Right ventricle myocardium inferior (tissue), 1 donor: ENCODE measurements at regions of chr6 and their contacts with region 1.

Region 1: GRCh38 chr6:55886185-55886836 is 10.9 kb upstream of the BMP5 start:
- DNase-seq: no peak
- ATAC-seq: no peak

Region 2: DNA sequence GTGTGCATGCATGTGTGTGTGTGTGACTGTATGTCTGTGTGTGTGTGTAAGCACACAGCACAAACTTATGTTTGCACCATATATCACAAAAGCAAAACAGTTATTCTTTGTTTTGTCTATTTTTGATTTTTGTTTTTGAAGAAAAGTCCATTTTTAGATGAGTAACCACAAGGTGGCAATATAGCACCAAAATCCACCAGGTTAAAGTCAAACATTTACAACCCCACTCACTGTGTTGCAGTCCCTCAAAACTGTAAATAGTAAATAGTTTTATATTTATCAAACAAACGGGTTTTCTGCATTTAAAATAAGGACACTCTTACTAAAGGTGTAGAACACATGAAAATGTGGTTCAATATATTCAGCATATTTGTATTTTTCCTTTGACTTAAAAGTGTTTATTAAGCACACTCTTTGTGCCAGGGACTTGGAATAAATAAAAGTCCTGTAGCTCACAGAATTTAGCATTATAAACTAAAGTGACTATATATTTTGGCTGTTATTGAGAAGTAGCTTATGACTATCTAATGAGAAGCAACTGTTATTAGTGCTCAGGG is 440.6 kb before region 1 on chr6:
- intact Hi-C with region 1: loop called (anchors 2 kb)
- DNase-seq: no peak
- ATAC-seq: no peak

Region 3: GRCh38 chr6:55617272-55617671 is 269.0 kb before region 1 on chr6:
- intact Hi-C with region 1: loop called (anchors 5 kb)
- DNase-seq: no peak
- ATAC-seq: no peak